HepG2 (cell line): ENCODE measurements at regions of chr2 and their contacts with region 1.

Region 1: DNA sequence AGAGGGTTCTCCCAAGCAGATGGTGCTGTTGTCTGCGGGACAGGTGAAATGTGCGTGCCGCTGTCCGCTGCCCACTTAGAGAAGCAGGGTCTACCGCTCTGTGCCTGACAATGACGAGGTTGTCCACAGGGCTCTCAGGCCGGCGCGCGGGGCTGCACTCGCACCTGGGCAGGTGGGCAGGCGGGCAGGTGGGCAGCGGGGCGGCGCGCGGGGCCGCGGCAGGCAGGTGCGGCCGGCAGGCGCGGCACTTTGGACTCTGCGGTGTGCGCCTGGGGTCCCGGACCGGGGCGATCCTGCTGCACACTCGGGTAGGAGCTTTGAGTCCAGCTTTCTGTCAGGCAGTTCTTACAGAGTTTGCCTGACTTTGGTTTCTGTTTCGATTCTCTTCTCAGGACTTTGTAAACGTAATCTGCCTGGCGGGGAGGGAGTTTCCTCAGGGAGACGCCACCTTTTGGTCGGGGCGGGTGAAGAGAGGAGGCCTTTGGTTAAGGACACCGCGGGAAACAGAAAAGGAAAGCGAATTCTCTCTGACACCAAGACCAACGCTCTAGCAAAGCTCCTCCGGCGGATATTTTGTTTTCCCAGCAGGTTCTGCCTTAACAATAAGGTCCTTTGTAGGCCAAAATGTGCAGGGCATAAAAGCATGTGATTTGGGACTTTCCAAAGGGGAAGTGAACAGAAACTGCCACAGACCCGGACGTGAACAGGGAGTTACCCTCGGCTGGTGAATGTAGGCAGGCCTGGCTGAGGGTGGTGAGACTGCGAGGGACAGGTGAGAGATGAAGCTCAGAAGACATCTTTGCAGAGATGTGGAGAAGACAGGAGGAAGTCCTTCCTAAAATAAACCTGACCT is at the start of gene IFIH1:
- DNase-seq: peak; percentile 91
- ATAC-seq: peak; percentile 93
- H3K4me3 ChIP-seq: peak within 1 kb of the TSS; percentile 80 to 88 (median 83)
- H3K27ac ChIP-seq: peak within 1 kb of the TSS; percentile 76
- H3K4me1 ChIP-seq: peaks cover 34% of the 10 kb centered on the region
- H3K27me3 ChIP-seq: no peaks in the 10 kb centered on the region; a peak in 1 of 5 replicates
- CTCF ChIP-seq: peak; percentile 74
- EP300 ChIP-seq: no peak
- POLR2A ChIP-seq: peak; percentile 41 to 79; a peak in 3 of 4 replicates
- RAD21 ChIP-seq: peak; percentile 47
- total RNA-seq, gene IFIH1: 11.5 and 15.0 TPM in 2 replicates

Region 2: GRCh38 chr2:161992526-161992925 is 326.0 kb before region 1 on chr2:
- CTCF ChIA-PET with region 1: no interaction called
- POLR2A ChIA-PET with region 1: no interaction called
- in situ Hi-C with region 1: loop called (anchors 25 kb)
- intact Hi-C with region 1: no loop called
- DNase-seq: no peak
- ATAC-seq: no peak
- H3K4me3 ChIP-seq: no peak overlapping the region
- H3K27ac ChIP-seq: no peak overlapping the region
- H3K4me1 ChIP-seq: peaks cover 21% of the 10 kb centered on the region
- H3K27me3 ChIP-seq: no peaks in the 10 kb centered on the region
- CTCF ChIP-seq: no peak
- EP300 ChIP-seq: no peak
- POLR2A ChIP-seq: no peak
- RAD21 ChIP-seq: no peak

Region 3: DNA sequence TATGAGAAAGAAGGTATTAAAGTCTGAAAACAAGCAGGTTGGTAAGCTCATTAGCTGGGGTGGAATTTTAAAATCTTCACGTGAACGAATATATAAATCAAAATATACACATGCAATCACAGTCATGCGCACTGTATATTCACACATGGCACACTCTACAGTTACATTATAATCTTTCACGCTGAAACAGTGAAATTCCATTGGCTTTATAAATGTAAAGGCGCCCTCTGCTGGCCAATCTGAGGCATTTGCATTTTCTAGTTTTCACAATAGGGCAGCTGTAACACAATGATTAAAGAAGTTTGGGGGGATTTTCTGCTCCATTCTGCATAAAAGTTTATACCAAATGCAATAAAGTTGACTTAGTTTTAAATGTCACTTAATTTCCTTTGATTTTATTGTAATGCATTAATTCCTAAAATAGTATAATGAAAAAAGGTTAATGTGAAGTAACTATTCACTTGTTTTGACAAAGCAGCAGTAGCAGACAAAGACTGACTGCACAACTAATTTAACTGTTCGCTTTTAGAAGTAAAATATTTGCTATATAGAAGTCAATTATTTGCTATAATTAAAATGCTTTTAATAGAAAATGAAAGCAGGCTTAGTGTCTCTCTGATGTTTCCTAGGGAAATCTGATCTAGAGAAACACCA is 17.3 kb before region 1 on chr2:
- CTCF ChIA-PET with region 1: interaction called, 3 read pairs
- POLR2A ChIA-PET with region 1: interaction called, 5 read pairs
- in situ Hi-C with region 1: no loop called
- intact Hi-C with region 1: loop called (anchors 1 kb)
- DNase-seq: peak; percentile 62
- ATAC-seq: peak; percentile 87
- H3K4me3 ChIP-seq: no peak overlapping the region
- H3K27ac ChIP-seq: no peak overlapping the region
- H3K4me1 ChIP-seq: no peaks in the 10 kb centered on the region
- H3K27me3 ChIP-seq: no peaks in the 10 kb centered on the region
- CTCF ChIP-seq: peak; percentile 80
- EP300 ChIP-seq: no peak
- POLR2A ChIP-seq: no peak
- RAD21 ChIP-seq: peak; percentile 12; the same call in 1 of the 2 replicates

Region 4: GRCh38 chr2:162333968-162334367 is 15.4 kb after region 1 on chr2:
- CTCF ChIA-PET with region 1: interaction called, 4 read pairs
- POLR2A ChIA-PET with region 1: interaction called, 9 read pairs
- in situ Hi-C with region 1: no loop called
- intact Hi-C with region 1: loop called (anchors 2 kb)
- DNase-seq: peak; percentile 38
- ATAC-seq: peak; percentile 95
- H3K4me3 ChIP-seq: no peak overlapping the region
- H3K27ac ChIP-seq: no peak overlapping the region
- H3K4me1 ChIP-seq: no peaks in the 10 kb centered on the region; the same call in 1 of the 2 replicates
- H3K27me3 ChIP-seq: no peaks in the 10 kb centered on the region
- CTCF ChIP-seq: peak; percentile 69
- EP300 ChIP-seq: no peak
- POLR2A ChIP-seq: no peak
- RAD21 ChIP-seq: no peak

Region 5: GRCh38 chr2:162343824-162344616 is 25.5 kb after region 1 on chr2 and contains the start of gene GCA:
- CTCF ChIA-PET with region 1: no interaction called
- POLR2A ChIA-PET with region 1: interaction called, 20 read pairs
- in situ Hi-C with region 1: no loop called
- intact Hi-C with region 1: loop called (anchors 1 kb)
- DNase-seq: peak; percentile 97
- ATAC-seq: peak; percentile 99
- H3K4me3 ChIP-seq: peak within 1 kb of the TSS; percentile 77 to 97 (median 90)
- H3K27ac ChIP-seq: peak within 1 kb of the TSS; percentile 61
- H3K4me1 ChIP-seq: peaks cover 22% of the 10 kb centered on the region
- H3K27me3 ChIP-seq: no peaks in the 10 kb centered on the region; a peak in 1 of 5 replicates
- CTCF ChIP-seq: peak; percentile 53
- EP300 ChIP-seq: no peak
- POLR2A ChIP-seq: peak; percentile 63 to 96; a peak in 3 of 4 replicates
- RAD21 ChIP-seq: peak; percentile 28; the same call in 1 of the 2 replicates
- total RNA-seq, gene GCA: 48.3 and 69.6 TPM in 2 replicates

Region 6: GRCh38 chr2:162581959-162582798 is 263.6 kb after region 1 on chr2:
- CTCF ChIA-PET with region 1: no interaction called
- POLR2A ChIA-PET with region 1: interaction called, 3 read pairs
- in situ Hi-C with region 1: no loop called
- intact Hi-C with region 1: loop called (anchors 2 kb)
- DNase-seq: peak; percentile 99
- ATAC-seq: peak; percentile 94
- H3K4me3 ChIP-seq: peak overlapping the region in 2 of 3 experiments; percentile 5 to 12; a peak in 3 of 6 replicates
- H3K27ac ChIP-seq: peak overlapping the region; percentile 52
- H3K4me1 ChIP-seq: peaks cover 76% of the 10 kb centered on the region
- H3K27me3 ChIP-seq: no peaks in the 10 kb centered on the region; a peak in 1 of 5 replicates
- CTCF ChIP-seq: 0 out of 2 replicates have a peak, but pooled peaks have one; percentile 32
- EP300 ChIP-seq: peak; percentile 97 to 100
- POLR2A ChIP-seq: no peak
- RAD21 ChIP-seq: peak; percentile 66